ENCODE measurements at regions of chr14 and their contacts with region 1.

Region 1: DNA sequence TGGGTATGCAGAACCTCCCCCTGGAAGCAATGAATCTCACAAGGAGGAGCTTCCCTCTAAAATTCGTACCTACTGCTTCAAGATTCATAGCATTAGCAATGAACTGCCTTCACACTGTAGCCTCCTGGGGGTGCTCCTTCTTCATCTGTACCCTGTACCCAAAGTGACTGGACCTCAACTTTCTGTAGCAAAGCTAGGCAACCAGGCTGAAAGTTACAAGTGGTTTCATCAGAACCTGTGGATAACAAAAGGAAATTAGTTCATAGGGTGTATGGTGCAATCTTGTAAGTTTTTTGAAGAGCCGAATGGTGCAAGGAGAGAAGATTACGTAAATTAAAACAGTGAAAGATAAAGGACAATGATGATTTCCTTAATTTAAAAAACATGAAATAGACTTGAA is 1541.7 kb upstream of the FLRT2 start:
- DNase-seq: no peak
- ATAC-seq: no peak
- H3K4me3 ChIP-seq: no peak overlapping the region
- H3K27ac ChIP-seq: no peak overlapping the region
- H3K4me1 ChIP-seq: no peaks in the 10 kb centered on the region
- H3K27me3 ChIP-seq: no peaks in the 10 kb centered on the region
- CTCF ChIP-seq: no peak
- POLR2A ChIP-seq: no peak

Region 2: DNA sequence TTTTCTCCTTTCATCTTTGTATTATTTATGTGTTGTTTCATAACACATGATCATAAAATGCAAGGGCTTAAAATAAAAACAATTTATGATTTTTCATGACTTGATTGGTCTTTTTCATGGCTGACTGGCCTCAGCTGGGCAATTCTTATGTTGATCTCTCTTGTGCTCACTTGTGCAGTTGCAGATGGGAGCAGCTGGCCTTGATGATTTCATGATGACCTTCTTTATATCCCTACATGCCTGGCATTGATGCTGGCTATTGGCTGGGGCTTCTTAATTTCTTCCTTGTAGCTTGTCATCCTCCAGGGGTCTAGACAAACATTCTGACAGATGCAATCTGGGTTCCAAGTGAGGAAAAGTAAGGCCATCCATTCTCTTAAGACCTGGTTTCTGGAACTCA is 291.2 kb before region 1 on chr14:
- intact Hi-C with region 1: no loop called
- DNase-seq: no peak
- ATAC-seq: no peak
- H3K4me3 ChIP-seq: no peak overlapping the region
- H3K27ac ChIP-seq: no peak overlapping the region
- H3K4me1 ChIP-seq: no peaks in the 10 kb centered on the region
- H3K27me3 ChIP-seq: no peaks in the 10 kb centered on the region
- CTCF ChIP-seq: no peak
- POLR2A ChIP-seq: no peak

Region 3: DNA sequence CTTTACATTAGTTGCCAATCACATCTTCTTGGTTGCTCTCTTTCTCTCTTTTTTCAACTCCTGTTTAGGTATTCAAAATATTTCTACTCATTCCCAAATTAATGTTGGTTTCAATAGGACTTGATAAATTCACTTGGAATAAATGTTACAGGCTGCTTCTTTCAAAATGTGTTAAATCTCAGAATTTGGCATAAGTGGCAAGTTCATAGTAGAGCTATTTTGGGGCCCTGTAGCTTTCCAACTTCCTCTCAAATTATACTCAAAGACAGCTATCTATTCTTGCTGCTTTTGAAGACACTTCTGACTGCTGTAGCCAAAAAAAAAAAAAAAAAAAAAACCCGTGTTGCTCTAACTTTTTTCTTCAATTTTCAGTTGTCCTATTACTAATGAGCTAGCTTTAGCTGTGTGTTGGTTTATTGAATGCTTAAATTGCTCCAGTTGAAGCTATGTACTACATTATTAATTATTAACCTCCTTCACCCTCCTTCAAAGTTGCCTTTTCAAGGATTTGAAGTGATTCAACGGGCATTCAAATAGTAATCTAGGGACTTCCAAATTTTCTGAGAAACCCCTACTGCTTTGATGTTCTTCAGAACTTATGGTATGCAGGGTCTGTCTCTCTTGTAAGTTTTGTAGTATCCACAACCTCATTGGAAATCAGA is 987.1 kb after region 1 on chr14:
- intact Hi-C with region 1: loop called in 1 of 10 experiments (anchors 5 kb)
- DNase-seq: no peak
- ATAC-seq: no peak
- H3K4me3 ChIP-seq: no peak overlapping the region
- H3K27ac ChIP-seq: no peak overlapping the region
- H3K4me1 ChIP-seq: peaks cover 0 to 11% (median 0%) of the 10 kb centered on the region in 12 donors
- H3K27me3 ChIP-seq: no peaks in the 10 kb centered on the region
- CTCF ChIP-seq: no peak
- POLR2A ChIP-seq: no peak

Measured in heart left ventricle (tissue), 16 donors.